ENCODE measurements at regions of chr10 and their contacts with region 1.

Region 1: DNA sequence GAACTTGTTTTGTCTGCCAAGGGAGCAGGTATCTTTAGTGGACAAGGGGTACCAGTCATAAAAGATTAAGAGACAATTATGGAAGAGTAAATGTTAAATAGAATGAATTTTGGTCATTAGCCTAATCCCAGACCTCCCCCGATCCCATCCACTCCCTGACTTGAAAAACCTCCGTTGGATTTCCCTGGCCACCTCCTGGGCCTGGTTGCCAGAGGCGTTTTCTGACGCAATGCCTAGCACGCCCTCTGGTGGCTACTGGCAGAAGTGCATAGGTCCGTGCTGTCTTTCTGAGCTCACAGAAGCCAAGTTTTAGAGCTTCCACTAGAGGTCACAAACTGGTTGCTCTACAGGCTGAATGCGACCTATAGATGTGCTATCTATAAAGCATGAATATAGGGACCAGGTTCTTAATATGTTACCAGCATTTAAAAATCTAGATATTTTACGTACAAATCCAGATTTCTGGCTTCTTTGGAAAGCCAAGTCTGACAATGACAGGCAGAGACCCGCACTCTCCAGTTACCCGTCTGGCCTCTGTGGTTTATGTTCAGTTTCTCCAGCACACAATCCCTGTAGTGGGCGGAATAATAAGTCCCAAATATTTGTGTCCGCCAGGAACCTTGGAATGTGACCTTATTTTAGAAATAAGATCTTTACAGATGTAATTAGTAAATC is 39.8 kb downstream of the SPOCK2 start:
- DNase-seq: peak; percentile 81 to 84 (median 81)
- H3K4me3 ChIP-seq: no peak overlapping the region
- H3K4me3 Mint-ChIP-seq: no peak overlapping the region
- H3K27ac ChIP-seq: no peak overlapping the region
- H3K27ac Mint-ChIP-seq: peak overlapping the region in 3 of 7 donors; percentile 20 to 78 (median 70)
- H3K4me1 ChIP-seq: no peaks in the 10 kb centered on the region
- H3K4me1 Mint-ChIP-seq: peaks cover 1 to 8% (median 6%) of the 10 kb centered on the region in 4 donors
- H3K27me3 ChIP-seq: no peaks in the 10 kb centered on the region
- H3K27me3 Mint-ChIP-seq: no peaks in the 10 kb centered on the region

Region 2: DNA sequence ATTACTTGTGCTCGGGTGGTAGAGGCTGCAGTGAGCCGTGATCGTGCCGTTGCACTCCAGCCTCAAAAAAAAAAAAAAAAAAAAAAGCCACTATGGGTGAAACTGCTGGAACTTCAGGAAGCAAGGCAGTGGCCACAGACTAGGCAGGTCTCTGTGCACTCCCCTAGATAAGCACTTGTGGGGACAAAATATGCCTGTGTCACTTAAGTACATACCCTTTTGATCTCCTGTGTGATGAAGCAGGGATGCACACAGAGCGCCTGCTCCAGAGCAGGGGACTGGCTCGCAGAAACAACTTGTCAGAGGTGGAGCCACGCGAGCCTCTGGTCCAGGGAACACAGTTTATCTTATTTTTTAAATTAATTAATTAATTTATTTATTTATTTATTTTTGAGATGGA is 154.7 kb before region 1 on chr10:
- CTCF ChIA-PET with region 1: interaction called, 38 read pairs
- POLR2A ChIA-PET with region 1: no interaction called
- intact Hi-C with region 1: loop called (anchors 1 kb)
- DNase-seq: no peak
- H3K4me3 ChIP-seq: no peak overlapping the region
- H3K4me3 Mint-ChIP-seq: no peak overlapping the region
- H3K27ac ChIP-seq: no peak overlapping the region
- H3K27ac Mint-ChIP-seq: no peak overlapping the region
- H3K4me1 ChIP-seq: peaks cover 9% of the 10 kb centered on the region
- H3K4me1 Mint-ChIP-seq: peaks cover 2 to 12% (median 6%) of the 10 kb centered on the region in 4 donors
- H3K27me3 ChIP-seq: no peaks in the 10 kb centered on the region
- H3K27me3 Mint-ChIP-seq: peaks cover 1 to 7% of the 10 kb centered on the region in 2 donors

Region 3: GRCh38 chr10:72061491-72061890 is 12.9 kb after region 1 on chr10:
- CTCF ChIA-PET with region 1: interaction called, 61 read pairs
- POLR2A ChIA-PET with region 1: interaction called, 83 read pairs
- intact Hi-C with region 1: no loop called
- DNase-seq: no peak
- H3K4me3 ChIP-seq: no peak overlapping the region
- H3K4me3 Mint-ChIP-seq: peak overlapping the region in 3 of 8 donors; percentile 34 to 71 (median 36)
- H3K27ac ChIP-seq: no peak overlapping the region
- H3K27ac Mint-ChIP-seq: peak overlapping the region in 6 of 7 donors; percentile 68 to 92 (median 83)
- H3K4me1 ChIP-seq: peaks cover 5% of the 10 kb centered on the region
- H3K4me1 Mint-ChIP-seq: peaks cover 17 to 49% (median 23%) of the 10 kb centered on the region in 4 donors
- H3K27me3 ChIP-seq: no peaks in the 10 kb centered on the region
- H3K27me3 Mint-ChIP-seq: no peaks in the 10 kb centered on the region

Region 4: GRCh38 chr10:72079356-72079755 is 30.8 kb after region 1 on chr10:
- CTCF ChIA-PET with region 1: interaction called, 12 read pairs
- POLR2A ChIA-PET with region 1: interaction called, 83 read pairs
- intact Hi-C with region 1: no loop called
- DNase-seq: peak; percentile 55 to 85 (median 71)
- H3K4me3 ChIP-seq: peak overlapping the region in 1 of 2 donors; percentile 25
- H3K4me3 Mint-ChIP-seq: peak overlapping the region; percentile 47 to 96 (median 81)
- H3K27ac ChIP-seq: peak overlapping the region; percentile 94
- H3K27ac Mint-ChIP-seq: peak overlapping the region; percentile 86 to 97 (median 93)
- H3K4me1 ChIP-seq: peaks cover 97% of the 10 kb centered on the region
- H3K4me1 Mint-ChIP-seq: peaks cover 59 to 99% (median 87%) of the 10 kb centered on the region in 4 donors
- H3K27me3 ChIP-seq: no peaks in the 10 kb centered on the region
- H3K27me3 Mint-ChIP-seq: no peaks in the 10 kb centered on the region

Region 5: DNA sequence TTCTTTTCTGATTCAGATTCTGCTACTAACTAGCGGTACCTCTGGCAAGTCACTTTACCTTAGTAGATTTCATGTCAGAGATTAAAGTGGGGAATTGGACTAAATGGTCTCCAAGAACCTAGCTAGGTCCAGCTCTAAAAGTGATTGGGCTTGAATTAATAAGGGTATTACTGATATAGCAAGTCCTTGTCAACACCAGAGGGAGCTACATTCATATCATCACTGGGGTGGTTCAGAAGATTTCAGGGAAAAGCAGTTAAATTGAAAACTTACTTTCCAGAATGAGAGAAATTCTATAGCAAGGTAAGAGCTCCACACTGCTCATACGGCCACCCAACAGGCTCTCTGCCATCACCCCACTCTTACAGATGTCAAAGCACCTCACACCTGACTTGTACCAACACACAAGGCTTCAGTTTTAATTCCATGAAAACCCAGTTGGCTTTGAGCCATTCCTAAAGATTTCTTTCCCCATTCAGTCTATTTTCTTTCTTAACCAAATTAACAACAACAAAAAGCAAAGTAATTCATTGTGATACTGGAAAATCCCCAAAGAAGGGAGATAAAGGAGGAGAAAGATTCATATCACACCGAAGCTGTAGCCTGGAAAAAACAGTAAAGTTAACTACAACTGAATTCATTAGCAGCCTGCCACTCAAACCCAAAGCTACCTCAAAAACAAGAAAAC is 77.7 kb after region 1 on chr10:
- CTCF ChIA-PET with region 1: interaction called, 37 read pairs
- POLR2A ChIA-PET with region 1: no interaction called
- intact Hi-C with region 1: no loop called
- DNase-seq: peak in 3 of 5 donors; percentile 16 to 28 (median 25)
- H3K4me3 ChIP-seq: no peak overlapping the region
- H3K4me3 Mint-ChIP-seq: no peak overlapping the region
- H3K27ac ChIP-seq: no peak overlapping the region
- H3K27ac Mint-ChIP-seq: peak overlapping the region in 5 of 7 donors; percentile 25 to 87 (median 38)
- H3K4me1 ChIP-seq: peaks cover 29% of the 10 kb centered on the region
- H3K4me1 Mint-ChIP-seq: peaks cover 24 to 34% (median 26%) of the 10 kb centered on the region in 4 donors
- H3K27me3 ChIP-seq: no peaks in the 10 kb centered on the region
- H3K27me3 Mint-ChIP-seq: no peaks in the 10 kb centered on the region

Region 6: GRCh38 chr10:72223743-72224101 is 175.1 kb after region 1 on chr10:
- CTCF ChIA-PET with region 1: interaction called, 30 read pairs
- POLR2A ChIA-PET with region 1: no interaction called
- intact Hi-C with region 1: loop called (anchors 1 kb)
- DNase-seq: no peak
- H3K4me3 ChIP-seq: no peak overlapping the region
- H3K4me3 Mint-ChIP-seq: peak overlapping the region in 3 of 8 donors; percentile 22 to 69 (median 44)
- H3K27ac ChIP-seq: no peak overlapping the region
- H3K27ac Mint-ChIP-seq: peak overlapping the region; percentile 17 to 91 (median 78)
- H3K4me1 ChIP-seq: peaks cover 54% of the 10 kb centered on the region
- H3K4me1 Mint-ChIP-seq: peaks cover 36 to 57% (median 45%) of the 10 kb centered on the region in 4 donors
- H3K27me3 ChIP-seq: no peaks in the 10 kb centered on the region
- H3K27me3 Mint-ChIP-seq: no peaks in the 10 kb centered on the region

Measured in CD4-positive, alpha-beta memory T cell (primary cell).